ENCODE measurements at regions of chr15 and their contacts with region 1.

Region 1: DNA sequence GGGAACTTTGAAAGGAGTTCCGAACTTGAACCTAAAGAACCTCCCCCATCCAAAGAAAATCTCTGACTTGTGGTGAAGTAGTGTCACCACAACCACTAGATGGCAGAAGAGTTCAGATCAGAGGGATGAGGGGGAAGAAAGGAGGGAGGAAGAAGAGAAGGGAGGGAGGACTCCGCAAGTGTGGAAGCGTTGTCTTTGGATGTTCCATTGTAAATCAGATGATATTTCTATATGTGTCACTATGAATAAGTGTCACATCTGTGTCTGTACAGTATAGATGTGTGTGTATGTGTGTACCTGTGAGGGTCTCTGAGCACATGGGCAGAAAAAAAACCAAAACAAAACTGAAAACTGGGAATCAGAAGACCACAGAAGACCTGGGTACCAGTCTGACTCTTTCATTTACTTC is 16.9 kb downstream of the SLC24A1 start:
- DNase-seq: peak in 1 of 2 donors; percentile 31
- ATAC-seq: peak in 7 of 8 donors; percentile 63 to 79 (median 68)
- H3K4me3 ChIP-seq: no peak overlapping the region
- H3K27ac ChIP-seq: no peak overlapping the region
- H3K4me1 ChIP-seq: peaks cover 0 to 25% (median 14%) of the 10 kb centered on the region in 9 donors
- H3K27me3 ChIP-seq: no peaks in the 10 kb centered on the region
- CTCF ChIP-seq: peak; percentile 50 to 87 (median 79)

Region 2: GRCh38 chr15:65690778-65691177 is 52.1 kb after region 1 on chr15:
- intact Hi-C with region 1: no loop called
- DNase-seq: no peak
- ATAC-seq: no peak
- H3K4me3 ChIP-seq: no peak overlapping the region
- H3K27ac ChIP-seq: no peak overlapping the region
- H3K4me1 ChIP-seq: no peaks in the 10 kb centered on the region
- H3K27me3 ChIP-seq: no peaks in the 10 kb centered on the region
- CTCF ChIP-seq: no peak

Region 3: DNA sequence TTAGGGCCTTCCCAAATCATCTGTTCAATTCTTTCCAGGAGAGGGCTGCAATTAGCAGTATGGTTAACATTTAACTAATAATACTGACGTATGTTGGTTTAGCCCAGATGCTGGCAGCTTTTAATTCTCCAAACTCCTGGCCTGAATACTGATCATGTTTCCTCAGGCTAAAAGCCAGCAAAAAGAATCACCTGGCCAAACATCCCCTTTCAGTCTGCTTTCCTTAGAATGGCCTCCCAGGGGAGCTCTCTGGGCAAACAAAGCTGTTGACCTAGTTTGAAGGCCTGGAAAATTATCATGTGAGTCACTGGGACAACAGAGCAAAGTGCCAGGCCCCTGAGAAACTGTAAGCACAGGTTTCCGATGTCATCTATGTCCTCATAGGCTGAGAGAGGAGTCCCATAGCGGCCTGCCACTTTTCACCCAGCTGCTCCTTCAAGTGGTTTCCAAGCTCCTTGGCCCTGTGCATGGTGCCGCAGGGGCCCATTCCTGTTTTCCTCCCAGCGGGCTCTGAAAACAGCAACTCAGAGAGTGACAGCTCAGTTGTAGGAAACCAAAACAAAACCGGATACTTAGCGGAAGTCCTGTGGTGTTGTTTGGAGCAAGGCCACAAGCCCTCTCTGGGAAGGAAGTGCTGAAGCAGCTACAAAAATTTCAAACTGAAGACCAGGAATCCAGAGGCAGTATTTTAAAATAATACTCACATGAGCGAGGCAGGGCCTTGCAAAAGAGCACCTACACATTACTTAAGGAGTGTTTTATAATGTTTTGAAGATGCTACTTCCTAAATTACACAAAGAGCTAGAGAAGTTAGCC is 194.1 kb after region 1 on chr15:
- intact Hi-C with region 1: loop called in 1 of 10 experiments (anchors 10 kb)
- DNase-seq: peak; percentile 74 to 92
- ATAC-seq: peak; percentile 91 to 97 (median 95)
- H3K4me3 ChIP-seq: peak overlapping the region in 8 of 10 donors; percentile 3 to 43 (median 26)
- H3K27ac ChIP-seq: peak overlapping the region; percentile 50 to 91 (median 80)
- H3K4me1 ChIP-seq: peaks cover 9 to 74% (median 32%) of the 10 kb centered on the region in 9 donors
- H3K27me3 ChIP-seq: no peaks in the 10 kb centered on the region
- CTCF ChIP-seq: peak in 3 of 9 donors; percentile 12 to 40 (median 39)

Region 4: GRCh38 chr15:65841121-65841925 is 202.6 kb after region 1 on chr15:
- intact Hi-C with region 1: loop called in 2 of 10 experiments (anchors 10 kb)
- DNase-seq: no peak
- ATAC-seq: peak in 3 of 8 donors; percentile 32 to 42 (median 42)
- H3K4me3 ChIP-seq: peak overlapping the region in 6 of 10 donors; percentile 4 to 40 (median 20)
- H3K27ac ChIP-seq: peak overlapping the region in 2 of 10 donors; percentile 21 to 70
- H3K4me1 ChIP-seq: peaks cover 0 to 40% (median 3%) of the 10 kb centered on the region in 9 donors
- H3K27me3 ChIP-seq: no peaks in the 10 kb centered on the region
- CTCF ChIP-seq: no peak

Region 5: DNA sequence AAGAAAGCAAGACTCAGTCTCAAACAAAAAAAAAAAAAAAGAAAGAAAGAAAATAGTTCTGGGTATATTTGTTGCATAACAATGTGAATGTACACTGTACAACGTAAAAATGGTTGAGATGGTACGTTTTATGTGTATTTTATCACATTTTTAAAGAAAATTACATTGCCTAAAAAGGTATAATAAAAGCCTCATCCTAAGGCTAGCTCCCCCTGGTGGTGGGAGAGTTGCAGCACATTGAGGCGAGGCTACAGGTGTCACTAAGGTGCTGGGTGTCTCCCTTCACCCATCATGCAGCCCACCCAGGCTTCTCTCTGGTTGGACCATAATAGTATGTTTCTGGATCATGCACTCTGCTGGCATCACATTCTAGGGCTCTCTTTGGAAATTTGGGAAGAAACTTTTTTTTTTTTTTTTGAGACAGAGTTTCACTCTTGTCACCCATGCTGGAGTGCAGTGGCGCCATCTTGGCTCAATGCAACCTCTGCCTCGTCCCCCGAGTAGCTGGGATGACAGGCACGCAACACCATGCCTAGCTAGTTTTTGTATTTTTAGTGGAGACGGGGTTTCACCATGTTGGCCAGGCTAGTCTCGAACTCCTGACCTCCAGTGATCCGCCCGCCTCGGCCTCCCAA is 218.3 kb after region 1 on chr15:
- intact Hi-C with region 1: loop called in 9 of 10 experiments (anchors 2 to 10 kb)
- DNase-seq: peak; percentile 61
- ATAC-seq: peak in 4 of 8 donors; percentile 42 to 56 (median 48)
- H3K4me3 ChIP-seq: no peak overlapping the region
- H3K27ac ChIP-seq: no peak overlapping the region
- H3K4me1 ChIP-seq: no peaks in the 10 kb centered on the region
- H3K27me3 ChIP-seq: no peaks in the 10 kb centered on the region
- CTCF ChIP-seq: peak; percentile 62 to 86 (median 79)

Region 6: DNA sequence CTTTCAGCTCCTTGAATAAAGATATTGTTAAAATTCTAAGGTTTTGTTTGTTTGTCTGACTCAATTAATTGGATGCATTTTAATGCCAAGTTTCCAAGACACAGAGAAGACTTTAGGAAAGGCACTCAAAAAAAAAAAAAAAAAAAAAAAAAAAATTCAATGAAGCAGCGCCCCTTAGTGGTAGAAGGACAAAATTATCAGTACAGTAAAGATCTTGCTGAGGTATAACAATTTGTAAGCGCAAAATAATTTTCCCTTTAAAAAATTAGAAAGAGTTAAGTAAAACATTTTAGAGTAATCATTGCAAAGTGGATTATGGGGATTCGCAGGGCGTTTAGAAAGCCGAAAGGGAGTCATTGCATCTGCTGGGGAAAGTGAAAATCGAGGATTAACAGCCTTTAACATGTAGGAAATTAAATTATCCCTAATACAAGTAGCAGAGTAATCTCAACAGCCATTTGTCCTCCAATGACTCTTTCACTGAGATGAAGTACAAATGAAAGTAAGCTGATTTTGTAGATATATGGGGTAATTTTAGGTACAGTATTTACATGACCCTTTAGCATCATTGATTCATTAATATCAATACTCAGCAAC is 648.9 kb after region 1 on chr15:
- intact Hi-C with region 1: loop called in 3 of 10 experiments (anchors 5 to 10 kb)
- DNase-seq: no peak
- ATAC-seq: no peak
- H3K4me3 ChIP-seq: no peak overlapping the region
- H3K27ac ChIP-seq: no peak overlapping the region
- H3K4me1 ChIP-seq: peaks cover 0 to 13% (median 5%) of the 10 kb centered on the region in 9 donors
- H3K27me3 ChIP-seq: no peaks in the 10 kb centered on the region
- CTCF ChIP-seq: peak; percentile 44 to 75 (median 66)